ENCODE measurements at regions of chr6 and their contacts with region 1.

Region 1: GRCh38 chr6:128327890-128328289 is 192.5 kb downstream of the PTPRK start:
- DNase-seq: peak; percentile 36 to 51
- H3K4me3 ChIP-seq: no peak overlapping the region
- H3K4me3 Mint-ChIP-seq: no peak overlapping the region
- H3K27ac Mint-ChIP-seq: no peak overlapping the region
- H3K4me1 ChIP-seq: no peaks in the 10 kb centered on the region
- H3K4me1 Mint-ChIP-seq: peaks cover 6% of the 10 kb centered on the region
- H3K27me3 ChIP-seq: no peaks in the 10 kb centered on the region
- H3K27me3 Mint-ChIP-seq: no peaks in the 10 kb centered on the region
- CTCF ChIP-seq: peak; percentile 45 to 51

Region 2: DNA sequence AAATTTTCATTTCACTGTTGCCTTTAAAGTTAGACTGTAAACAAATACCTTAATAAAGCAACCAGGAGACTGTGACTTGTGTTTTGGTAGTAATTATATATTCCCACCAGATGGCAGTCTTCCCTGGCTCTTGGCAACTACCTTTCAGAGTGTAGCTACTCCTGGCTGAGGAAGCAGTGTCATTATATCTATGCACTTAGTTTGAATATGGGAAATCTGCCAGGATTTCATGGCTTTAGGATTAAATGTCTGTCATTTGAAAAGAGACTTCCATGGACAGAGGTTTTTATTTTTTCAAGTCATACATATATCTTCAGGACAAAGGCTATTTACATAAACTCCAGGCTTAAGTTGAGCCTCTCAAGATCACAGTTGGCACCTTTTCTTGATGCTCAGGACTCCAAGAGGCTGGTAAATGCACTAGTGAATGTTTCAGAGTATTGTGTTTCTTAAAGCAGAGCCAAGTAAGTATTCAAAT is 590.8 kb before region 1 on chr6:
- CTCF ChIA-PET with region 1: interaction called, 8 read pairs
- POLR2A ChIA-PET with region 1: no interaction called
- intact Hi-C with region 1: loop called (anchors 1 kb)
- DNase-seq: peak in 1 of 2 experiments; percentile 56
- H3K4me3 ChIP-seq: no peak overlapping the region
- H3K4me3 Mint-ChIP-seq: no peak overlapping the region
- H3K27ac Mint-ChIP-seq: no peak overlapping the region
- H3K4me1 ChIP-seq: no peaks in the 10 kb centered on the region
- H3K4me1 Mint-ChIP-seq: no peaks in the 10 kb centered on the region
- H3K27me3 ChIP-seq: no peaks in the 10 kb centered on the region
- H3K27me3 Mint-ChIP-seq: peaks cover 3% of the 10 kb centered on the region
- CTCF ChIP-seq: peak; percentile 56 to 57

Region 3: GRCh38 chr6:127855542-127856159 is 472.2 kb before region 1 on chr6:
- CTCF ChIA-PET with region 1: interaction called, 21 read pairs
- POLR2A ChIA-PET with region 1: no interaction called
- intact Hi-C with region 1: loop called (anchors 1 kb)
- DNase-seq: peak in 1 of 2 experiments; percentile 36
- H3K4me3 ChIP-seq: no peak overlapping the region
- H3K4me3 Mint-ChIP-seq: no peak overlapping the region
- H3K27ac Mint-ChIP-seq: no peak overlapping the region
- H3K4me1 ChIP-seq: no peaks in the 10 kb centered on the region
- H3K4me1 Mint-ChIP-seq: no peaks in the 10 kb centered on the region
- H3K27me3 ChIP-seq: no peaks in the 10 kb centered on the region
- H3K27me3 Mint-ChIP-seq: no peaks in the 10 kb centered on the region
- CTCF ChIP-seq: peak; percentile 42 to 62

Region 4: GRCh38 chr6:128068116-128068479 is 259.8 kb before region 1 on chr6:
- CTCF ChIA-PET with region 1: interaction called, 3 read pairs
- POLR2A ChIA-PET with region 1: no interaction called
- intact Hi-C with region 1: loop called (anchors 10 kb)
- DNase-seq: no peak
- H3K4me3 ChIP-seq: no peak overlapping the region
- H3K4me3 Mint-ChIP-seq: no peak overlapping the region
- H3K27ac Mint-ChIP-seq: no peak overlapping the region
- H3K4me1 ChIP-seq: peaks cover 36% of the 10 kb centered on the region
- H3K4me1 Mint-ChIP-seq: peaks cover 6% of the 10 kb centered on the region
- H3K27me3 ChIP-seq: no peaks in the 10 kb centered on the region
- H3K27me3 Mint-ChIP-seq: no peaks in the 10 kb centered on the region
- CTCF ChIP-seq: no peak

Region 5: GRCh38 chr6:128168244-128168643 is 159.6 kb before region 1 on chr6:
- CTCF ChIA-PET with region 1: no interaction called
- POLR2A ChIA-PET with region 1: no interaction called
- intact Hi-C with region 1: loop called (anchors 2 kb)
- DNase-seq: no peak
- H3K4me3 ChIP-seq: no peak overlapping the region
- H3K4me3 Mint-ChIP-seq: no peak overlapping the region
- H3K27ac Mint-ChIP-seq: no peak overlapping the region
- H3K4me1 ChIP-seq: no peaks in the 10 kb centered on the region
- H3K4me1 Mint-ChIP-seq: no peaks in the 10 kb centered on the region
- H3K27me3 ChIP-seq: no peaks in the 10 kb centered on the region
- H3K27me3 Mint-ChIP-seq: no peaks in the 10 kb centered on the region
- CTCF ChIP-seq: no peak

Region 6: DNA sequence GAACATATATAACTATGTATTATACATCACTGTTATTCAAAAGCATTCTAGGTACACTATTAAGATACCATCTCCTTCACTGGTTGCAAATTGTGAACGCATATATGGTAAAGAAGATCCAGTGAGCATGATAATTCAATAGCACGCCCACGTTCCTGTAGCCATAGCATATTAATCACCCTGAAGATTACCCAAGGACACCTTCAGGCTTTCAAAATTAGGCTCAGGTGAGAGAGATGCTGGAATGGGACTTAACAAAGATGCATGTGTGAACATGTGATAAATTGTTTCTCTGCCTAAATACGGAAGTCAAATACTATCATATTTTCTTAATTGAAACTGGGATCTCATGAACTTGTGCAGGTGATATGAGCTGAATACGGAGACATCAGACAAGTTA is 111.0 kb before region 1 on chr6:
- CTCF ChIA-PET with region 1: no interaction called
- POLR2A ChIA-PET with region 1: no interaction called
- intact Hi-C with region 1: loop called (anchors 2 kb)
- DNase-seq: no peak
- H3K4me3 ChIP-seq: no peak overlapping the region
- H3K4me3 Mint-ChIP-seq: no peak overlapping the region
- H3K27ac Mint-ChIP-seq: no peak overlapping the region
- H3K4me1 ChIP-seq: peaks cover 2% of the 10 kb centered on the region
- H3K4me1 Mint-ChIP-seq: peaks cover 4% of the 10 kb centered on the region
- H3K27me3 ChIP-seq: no peaks in the 10 kb centered on the region
- H3K27me3 Mint-ChIP-seq: no peaks in the 10 kb centered on the region
- CTCF ChIP-seq: no peak

Region 7: GRCh38 chr6:128379577-128379976 is 51.7 kb after region 1 on chr6:
- CTCF ChIA-PET with region 1: no interaction called
- POLR2A ChIA-PET with region 1: no interaction called
- intact Hi-C with region 1: no loop called
- DNase-seq: no peak
- H3K4me3 ChIP-seq: no peak overlapping the region
- H3K4me3 Mint-ChIP-seq: no peak overlapping the region
- H3K27ac Mint-ChIP-seq: no peak overlapping the region
- H3K4me1 ChIP-seq: no peaks in the 10 kb centered on the region
- H3K4me1 Mint-ChIP-seq: no peaks in the 10 kb centered on the region
- H3K27me3 ChIP-seq: no peaks in the 10 kb centered on the region
- H3K27me3 Mint-ChIP-seq: no peaks in the 10 kb centered on the region
- CTCF ChIP-seq: no peak

Region 8: GRCh38 chr6:128617285-128617684 is 289.4 kb after region 1 on chr6:
- CTCF ChIA-PET with region 1: no interaction called
- POLR2A ChIA-PET with region 1: no interaction called
- intact Hi-C with region 1: no loop called
- DNase-seq: no peak
- H3K4me3 ChIP-seq: no peak overlapping the region
- H3K4me3 Mint-ChIP-seq: no peak overlapping the region
- H3K27ac Mint-ChIP-seq: no peak overlapping the region
- H3K4me1 ChIP-seq: no peaks in the 10 kb centered on the region
- H3K4me1 Mint-ChIP-seq: no peaks in the 10 kb centered on the region
- H3K27me3 ChIP-seq: no peaks in the 10 kb centered on the region
- H3K27me3 Mint-ChIP-seq: no peaks in the 10 kb centered on the region
- CTCF ChIP-seq: no peak